Activated CD4-positive, alpha-beta memory T cell treated with anti-CD3 and anti-CD28 coated beads for 36 hours (primary cell): ENCODE measurements at regions of chr9 and their contacts with region 1.

Region 1: GRCh38 chr9:72526901-72527800 is 5.7 kb downstream of the TMC1 start:
- DNase-seq: peak; percentile 91
- H3K4me3 Mint-ChIP-seq: peak overlapping the region; percentile 73
- H3K27ac Mint-ChIP-seq: peak overlapping the region; percentile 93
- H3K4me1 Mint-ChIP-seq: peaks cover 42% of the 10 kb centered on the region
- H3K27me3 Mint-ChIP-seq: no peaks in the 10 kb centered on the region

Region 2: GRCh38 chr9:72364679-72365524 is 162.2 kb before region 1 on chr9 and contains the start of gene ZFAND5:
- CTCF ChIA-PET with region 1: interaction called, 4 read pairs
- POLR2A ChIA-PET with region 1: interaction called, 9 read pairs
- intact Hi-C with region 1: loop called (anchors 1 kb)
- DNase-seq: peak; percentile 95
- H3K4me3 Mint-ChIP-seq: peak within 1 kb of the TSS; percentile 84
- H3K27ac Mint-ChIP-seq: peak within 1 kb of the TSS; percentile 96
- H3K4me1 Mint-ChIP-seq: peaks cover 35% of the 10 kb centered on the region
- H3K27me3 Mint-ChIP-seq: no peaks in the 10 kb centered on the region
- total RNA-seq, gene ZFAND5: 92.4 to 93.8 TPM

Region 3: DNA sequence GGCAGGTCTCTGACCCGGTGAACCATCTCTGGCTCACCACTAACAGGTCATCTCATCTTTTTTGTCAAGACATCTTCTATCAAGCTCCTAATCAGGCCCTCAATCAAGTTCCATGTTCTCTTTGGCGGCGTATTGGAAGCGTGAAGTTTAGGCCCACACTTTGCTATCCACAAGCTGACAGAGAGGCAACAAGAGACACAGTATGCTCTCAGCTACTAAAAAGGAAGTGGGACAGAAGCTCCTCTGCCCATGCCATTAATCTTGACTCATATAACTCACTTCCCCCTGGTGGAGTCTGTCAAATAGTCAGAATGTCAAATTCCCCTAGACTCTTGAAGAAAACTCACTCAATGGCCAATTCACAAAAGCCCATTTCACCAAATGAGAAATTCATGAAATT is 83.3 kb before region 1 on chr9:
- CTCF ChIA-PET with region 1: no interaction called
- POLR2A ChIA-PET with region 1: interaction called, 3 read pairs
- intact Hi-C with region 1: loop called (anchors 1 kb)
- DNase-seq: peak; percentile 28
- H3K4me3 Mint-ChIP-seq: peak overlapping the region; percentile 25
- H3K27ac Mint-ChIP-seq: peak overlapping the region; percentile 83
- H3K4me1 Mint-ChIP-seq: peaks cover 28% of the 10 kb centered on the region
- H3K27me3 Mint-ChIP-seq: no peaks in the 10 kb centered on the region

Region 4: GRCh38 chr9:72509635-72510034 is 17.5 kb before region 1 on chr9:
- CTCF ChIA-PET with region 1: interaction called, 3 read pairs
- POLR2A ChIA-PET with region 1: interaction called, 4 read pairs
- intact Hi-C with region 1: loop called (anchors 1 kb)
- DNase-seq: no peak
- H3K4me3 Mint-ChIP-seq: no peak overlapping the region
- H3K27ac Mint-ChIP-seq: peak overlapping the region; percentile 86
- H3K4me1 Mint-ChIP-seq: peaks cover 19% of the 10 kb centered on the region
- H3K27me3 Mint-ChIP-seq: no peaks in the 10 kb centered on the region

Region 5: DNA sequence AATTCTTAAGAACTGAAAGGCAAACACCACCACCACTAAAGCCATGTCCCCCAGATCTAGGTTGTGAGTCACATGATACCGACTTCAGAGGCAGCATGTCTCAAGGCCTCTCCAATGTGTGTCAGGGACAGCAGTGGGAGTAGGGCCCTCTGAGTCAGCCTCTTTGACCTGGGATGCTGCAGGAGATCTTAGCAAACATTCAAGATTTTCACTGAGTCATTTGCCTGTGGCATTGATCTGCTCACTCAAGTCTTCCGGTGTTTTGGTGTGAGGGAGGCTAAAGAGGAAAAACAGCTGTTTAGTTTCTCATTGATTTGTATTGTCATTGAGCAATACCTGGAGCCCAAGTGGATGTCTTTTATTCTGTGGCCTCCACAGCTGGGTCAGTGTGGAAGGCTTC is 30.4 kb after region 1 on chr9:
- CTCF ChIA-PET with region 1: interaction called, 3 read pairs
- POLR2A ChIA-PET with region 1: no interaction called
- intact Hi-C with region 1: loop called (anchors 1 kb)
- DNase-seq: peak; percentile 79
- H3K4me3 Mint-ChIP-seq: no peak overlapping the region
- H3K27ac Mint-ChIP-seq: peak overlapping the region; percentile 60
- H3K4me1 Mint-ChIP-seq: peaks cover 16% of the 10 kb centered on the region
- H3K27me3 Mint-ChIP-seq: no peaks in the 10 kb centered on the region

Region 6: GRCh38 chr9:72586388-72587130 is 59.4 kb after region 1 on chr9:
- CTCF ChIA-PET with region 1: interaction called, 3 read pairs
- POLR2A ChIA-PET with region 1: interaction called, 3 read pairs
- intact Hi-C with region 1: loop called (anchors 1 kb)
- DNase-seq: peak; percentile 44
- H3K4me3 Mint-ChIP-seq: no peak overlapping the region
- H3K27ac Mint-ChIP-seq: peak overlapping the region; percentile 50
- H3K4me1 Mint-ChIP-seq: peaks cover 47% of the 10 kb centered on the region
- H3K27me3 Mint-ChIP-seq: no peaks in the 10 kb centered on the region

Region 7: GRCh38 chr9:72749276-72749675 is 222.1 kb after region 1 on chr9:
- CTCF ChIA-PET with region 1: no interaction called
- POLR2A ChIA-PET with region 1: no interaction called
- intact Hi-C with region 1: no loop called
- DNase-seq: no peak
- H3K4me3 Mint-ChIP-seq: no peak overlapping the region
- H3K27ac Mint-ChIP-seq: no peak overlapping the region
- H3K4me1 Mint-ChIP-seq: no peaks in the 10 kb centered on the region
- H3K27me3 Mint-ChIP-seq: peaks cover 6% of the 10 kb centered on the region

Region 8: DNA sequence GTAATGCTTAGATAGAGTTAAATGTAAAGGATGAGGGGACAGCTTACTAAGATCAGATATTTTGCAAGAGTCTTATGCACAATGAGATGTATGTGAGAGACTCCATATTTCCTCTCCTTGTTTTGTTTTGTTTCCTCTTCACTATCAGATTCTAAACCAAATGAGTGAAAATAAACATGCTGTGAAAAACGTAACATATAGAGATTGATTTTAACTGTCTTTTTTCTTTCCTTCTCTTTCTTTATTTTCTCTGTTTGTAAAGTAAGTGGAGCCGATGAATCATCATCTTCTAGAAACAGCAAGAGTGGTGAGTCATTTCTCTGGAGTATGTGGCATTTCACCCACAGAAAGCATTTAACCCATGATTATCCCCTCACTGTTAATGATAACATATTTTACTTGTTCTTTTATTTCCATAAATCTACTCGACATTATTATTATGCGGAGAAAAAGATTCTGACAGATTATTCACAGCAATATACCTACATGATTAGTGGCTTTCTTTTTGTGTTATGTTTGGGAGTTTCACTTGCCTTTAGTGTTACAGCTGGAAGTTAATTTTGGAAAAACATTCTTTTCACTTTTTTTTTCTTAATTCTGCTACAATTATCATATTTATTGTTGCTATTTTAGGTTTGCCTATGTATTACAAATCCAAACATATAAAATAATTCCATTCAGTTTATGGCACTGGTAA is 622.4 kb after region 1 on chr9:
- CTCF ChIA-PET with region 1: no interaction called
- POLR2A ChIA-PET with region 1: no interaction called
- intact Hi-C with region 1: loop called (anchors 5 kb)
- DNase-seq: no peak
- H3K4me3 Mint-ChIP-seq: peak overlapping the region; percentile 55
- H3K27ac Mint-ChIP-seq: peak overlapping the region; percentile 86
- H3K4me1 Mint-ChIP-seq: peaks cover 66% of the 10 kb centered on the region
- H3K27me3 Mint-ChIP-seq: no peaks in the 10 kb centered on the region